Cardiac septum (tissue), 1 donor: ENCODE measurements at regions of chr12 and their contacts with region 1.

Region 1: DNA sequence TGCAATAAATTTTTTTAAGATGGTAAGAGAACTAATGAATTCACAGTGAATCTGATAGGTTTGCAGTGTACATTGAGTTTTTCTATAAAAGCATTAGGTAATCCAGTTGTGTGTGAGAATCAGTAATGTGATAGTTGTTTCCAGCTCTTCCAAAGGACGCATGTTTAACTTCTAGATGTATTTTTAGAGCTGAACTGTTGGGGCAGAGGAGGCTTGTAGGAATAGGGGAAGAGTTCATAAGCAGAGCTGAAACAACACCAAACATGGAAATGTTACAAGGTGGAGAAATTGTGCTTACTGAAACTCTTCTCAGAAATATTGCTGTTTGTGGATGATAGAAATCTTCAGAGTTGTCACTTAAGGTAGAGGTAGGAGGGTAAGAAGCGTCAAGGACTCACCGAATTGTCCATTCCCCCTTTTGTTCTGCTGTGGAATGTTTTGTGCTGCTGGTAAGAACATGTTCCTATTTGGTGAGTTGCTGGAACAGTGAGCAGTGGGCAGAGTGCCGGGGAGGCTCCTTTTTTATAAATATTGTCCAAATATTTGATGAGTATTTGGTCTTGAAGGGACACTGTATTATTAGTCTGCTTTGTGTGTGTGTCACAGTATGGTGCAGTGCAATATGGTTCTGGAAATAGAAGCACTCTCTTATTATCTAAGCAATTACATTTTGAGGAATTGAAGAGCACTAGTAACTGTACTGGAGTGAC is 76.7 kb downstream of the ANO6 start:
- DNase-seq: no peak

Region 2: DNA sequence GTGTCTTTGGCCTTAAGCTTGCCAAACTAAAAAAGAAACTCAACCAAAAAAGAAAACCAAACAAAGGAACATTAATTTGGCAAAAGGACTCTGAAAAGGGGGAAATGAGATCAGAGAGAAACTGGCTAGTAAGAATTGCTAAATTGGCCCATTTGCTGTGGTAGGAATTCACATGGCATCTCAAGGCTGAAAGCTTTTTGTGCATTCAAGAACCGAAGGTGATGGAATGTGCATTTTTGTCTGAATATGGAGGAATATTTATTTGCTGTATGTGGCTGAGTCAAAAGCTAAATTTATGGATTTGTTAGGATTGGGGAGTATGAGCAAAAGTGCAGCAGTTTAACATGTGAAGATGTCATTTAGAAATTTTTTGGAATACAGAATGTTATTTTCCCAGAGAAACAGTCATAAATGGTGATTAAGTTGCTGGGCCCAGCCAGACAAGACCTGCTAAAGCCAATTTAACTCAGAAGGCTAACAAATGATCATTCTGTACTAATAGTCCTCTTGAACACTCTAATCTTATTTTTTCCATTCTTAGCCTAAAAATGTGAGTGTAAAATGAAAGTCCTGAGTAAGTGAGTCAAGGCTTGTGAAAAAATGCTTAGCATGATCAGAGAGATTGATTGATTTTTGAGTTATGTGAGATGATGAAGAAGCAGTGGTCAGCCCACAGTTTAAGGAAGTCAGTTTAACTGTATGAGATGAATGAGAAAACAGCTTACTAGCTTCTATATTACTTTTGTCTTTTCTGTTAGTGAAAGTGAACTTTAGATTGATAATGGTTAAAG is 17.4 kb after region 1 on chr12:
- intact Hi-C with region 1: no loop called
- DNase-seq: no peak

Region 3: DNA sequence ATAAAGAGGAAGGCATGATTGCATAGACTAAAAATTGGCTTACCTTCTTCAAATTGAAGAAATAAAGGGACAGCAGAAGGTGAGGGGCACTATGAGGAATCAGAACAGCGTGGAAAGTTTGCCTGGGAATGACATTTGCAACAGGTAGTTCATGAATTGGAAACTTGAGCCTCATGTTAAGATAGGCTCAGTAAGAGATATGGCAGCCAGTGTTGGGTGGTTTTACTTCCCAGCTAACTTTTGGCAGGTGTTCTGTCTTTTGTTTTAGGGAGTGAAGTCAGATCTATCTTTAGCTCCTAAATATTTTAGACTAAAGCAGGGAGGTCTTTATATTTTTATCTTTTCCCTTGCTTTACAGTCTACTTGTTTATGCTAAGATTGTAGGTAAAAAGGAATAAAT is 45.6 kb after region 1 on chr12:
- intact Hi-C with region 1: loop called (anchors 2 kb)
- DNase-seq: no peak